ENCODE measurements at regions of chr10 and their contacts with region 1.

Region 1: DNA sequence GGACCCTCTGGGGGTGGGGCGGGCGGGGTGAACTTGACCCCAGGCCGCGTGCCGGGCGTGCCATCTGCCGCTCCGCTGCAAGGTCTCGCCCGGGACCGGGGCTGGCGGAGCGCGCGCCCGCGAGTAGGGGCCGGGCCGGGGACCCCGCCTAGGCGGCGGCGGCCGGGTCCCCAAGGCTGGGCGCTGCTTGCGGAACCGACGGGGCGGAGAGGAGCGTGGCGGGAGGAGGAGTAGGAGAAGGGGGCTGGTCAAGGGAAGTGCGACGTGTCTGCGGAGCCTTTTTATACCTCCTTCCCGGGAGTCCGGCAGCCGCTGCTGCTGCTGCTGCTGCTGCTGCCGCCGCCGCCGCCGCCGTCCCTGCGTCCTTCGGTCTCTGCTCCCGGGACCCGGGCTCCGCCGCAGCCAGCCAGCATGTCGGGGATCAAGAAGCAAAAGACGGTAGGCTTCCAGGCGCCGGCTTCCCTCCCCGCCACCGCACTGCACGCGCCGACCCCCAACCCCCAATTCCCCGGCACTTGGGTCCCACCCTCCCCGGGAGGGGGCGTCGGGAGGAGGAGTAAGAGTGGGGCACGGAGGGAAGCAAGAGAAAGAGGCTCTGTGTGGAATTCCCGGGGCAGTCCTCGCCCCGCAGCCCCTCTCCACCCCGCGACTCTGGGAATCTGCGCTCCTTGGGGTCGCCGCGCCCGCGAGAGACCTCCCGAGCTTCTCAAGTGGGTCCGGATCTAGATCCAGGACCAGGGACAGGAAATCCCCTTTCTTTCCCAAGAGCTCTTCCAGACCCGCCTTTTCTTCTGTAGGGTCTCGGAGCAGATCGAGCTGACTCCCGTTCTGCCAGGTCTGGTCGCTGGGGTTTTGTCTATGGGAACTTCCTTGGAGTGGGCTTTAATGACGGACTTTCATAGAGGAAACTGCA is at the start of gene PAPSS2:
- DNase-seq: peak; percentile 53
- ATAC-seq: peak; percentile 59
- H3K4me3 ChIP-seq: peak within 1 kb of the TSS; percentile 93
- H3K27ac ChIP-seq: no peak within 1 kb of the TSS
- H3K4me1 ChIP-seq: peaks cover 31% of the 10 kb centered on the region
- H3K27me3 ChIP-seq: no peaks in the 10 kb centered on the region
- CTCF ChIP-seq: no peak
- total RNA-seq, gene PAPSS2: 16.4 and 17.3 TPM in 2 replicates

Region 2: DNA sequence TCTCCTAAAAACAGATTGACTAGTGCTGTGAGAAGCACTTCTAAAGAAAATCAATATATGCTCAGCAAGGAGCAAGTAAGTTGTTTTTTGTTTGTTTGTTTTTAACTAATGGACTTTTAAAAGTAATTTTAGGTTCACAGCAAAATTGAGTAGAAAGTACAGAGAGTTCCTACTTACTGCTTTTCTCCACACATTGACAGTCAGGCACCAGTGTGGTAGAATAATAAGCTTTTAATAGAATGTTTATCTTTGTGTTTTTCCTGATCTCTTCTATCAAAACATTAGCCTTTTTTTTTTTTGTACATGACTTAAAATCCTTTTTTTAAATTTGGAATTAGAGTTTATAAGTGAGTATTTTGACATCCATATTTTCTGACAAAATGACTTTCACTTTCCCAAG is 127.1 kb before region 1 on chr10:
- CTCF ChIA-PET with region 1: interaction called, 3 read pairs
- POLR2A ChIA-PET with region 1: no interaction called
- intact Hi-C with region 1: loop called (anchors 1 kb)
- DNase-seq: no peak
- ATAC-seq: no peak
- H3K4me3 ChIP-seq: no peak overlapping the region
- H3K27ac ChIP-seq: no peak overlapping the region
- H3K4me1 ChIP-seq: no peaks in the 10 kb centered on the region; the same call in 1 of the 2 replicates
- H3K27me3 ChIP-seq: no peaks in the 10 kb centered on the region
- CTCF ChIP-seq: no peak

Region 3: GRCh38 chr10:87675396-87676376 is 15.9 kb after region 1 on chr10:
- CTCF ChIA-PET with region 1: no interaction called
- POLR2A ChIA-PET with region 1: interaction called, 10 read pairs
- intact Hi-C with region 1: no loop called
- DNase-seq: peak; percentile 82
- ATAC-seq: peak; percentile 62
- H3K4me3 ChIP-seq: no peak overlapping the region
- H3K27ac ChIP-seq: peak overlapping the region; percentile 43
- H3K4me1 ChIP-seq: peaks cover 18% of the 10 kb centered on the region
- H3K27me3 ChIP-seq: no peaks in the 10 kb centered on the region
- CTCF ChIP-seq: no peak

Region 4: DNA sequence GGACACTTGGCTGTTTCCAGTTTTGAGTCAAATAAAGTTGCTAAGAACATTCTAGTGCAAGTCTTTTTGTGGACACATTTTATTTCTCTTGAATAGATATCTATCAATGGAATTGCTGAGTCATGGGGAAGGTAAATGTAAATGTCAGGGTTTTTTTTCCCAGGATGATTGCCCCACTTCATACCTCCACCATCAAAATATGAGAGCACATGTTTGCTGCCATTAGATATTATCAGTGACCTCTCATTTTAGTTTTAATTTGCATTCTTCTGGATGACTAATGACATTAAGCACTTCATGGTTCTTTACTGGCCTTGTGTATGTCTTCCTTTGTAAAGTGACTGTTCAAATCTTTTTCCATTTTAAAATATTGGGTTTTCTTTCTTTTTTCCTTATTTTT is 45.5 kb after region 1 on chr10:
- CTCF ChIA-PET with region 1: no interaction called
- POLR2A ChIA-PET with region 1: no interaction called
- intact Hi-C with region 1: no loop called
- DNase-seq: peak; percentile 73
- ATAC-seq: peak; percentile 78
- H3K4me3 ChIP-seq: no peak overlapping the region
- H3K27ac ChIP-seq: peak overlapping the region; percentile 60
- H3K4me1 ChIP-seq: peaks cover 25% of the 10 kb centered on the region
- H3K27me3 ChIP-seq: no peaks in the 10 kb centered on the region
- CTCF ChIP-seq: no peak

Region 5: DNA sequence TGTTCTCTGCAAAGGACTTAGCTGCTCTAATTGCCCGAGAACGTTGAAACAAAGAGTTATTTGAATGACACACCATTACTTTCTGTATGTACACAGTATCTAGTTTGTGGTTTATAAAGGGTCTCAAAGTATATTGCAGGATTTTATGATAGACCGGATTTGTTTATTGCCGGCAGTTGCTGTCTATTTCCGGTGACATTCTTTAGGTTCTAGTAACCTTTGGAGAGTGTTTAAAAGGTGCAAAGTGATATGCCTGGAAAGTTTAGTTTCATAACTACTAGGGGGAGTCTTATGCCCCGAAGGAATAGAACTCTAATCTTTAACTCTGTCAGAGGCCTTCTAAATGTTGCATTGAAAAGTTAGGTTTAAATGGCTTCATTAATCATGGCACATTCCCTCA is 63.7 kb after region 1 on chr10:
- CTCF ChIA-PET with region 1: no interaction called
- POLR2A ChIA-PET with region 1: no interaction called
- intact Hi-C with region 1: loop called (anchors 5 kb)
- DNase-seq: peak; percentile 54
- ATAC-seq: peak; percentile 92
- H3K4me3 ChIP-seq: 0 out of 2 replicates have a peak overlapping the region, but pooled peaks have one; percentile 18
- H3K27ac ChIP-seq: peak overlapping the region; percentile 65
- H3K4me1 ChIP-seq: peaks cover 22% of the 10 kb centered on the region
- H3K27me3 ChIP-seq: no peaks in the 10 kb centered on the region
- CTCF ChIP-seq: no peak

Region 6: DNA sequence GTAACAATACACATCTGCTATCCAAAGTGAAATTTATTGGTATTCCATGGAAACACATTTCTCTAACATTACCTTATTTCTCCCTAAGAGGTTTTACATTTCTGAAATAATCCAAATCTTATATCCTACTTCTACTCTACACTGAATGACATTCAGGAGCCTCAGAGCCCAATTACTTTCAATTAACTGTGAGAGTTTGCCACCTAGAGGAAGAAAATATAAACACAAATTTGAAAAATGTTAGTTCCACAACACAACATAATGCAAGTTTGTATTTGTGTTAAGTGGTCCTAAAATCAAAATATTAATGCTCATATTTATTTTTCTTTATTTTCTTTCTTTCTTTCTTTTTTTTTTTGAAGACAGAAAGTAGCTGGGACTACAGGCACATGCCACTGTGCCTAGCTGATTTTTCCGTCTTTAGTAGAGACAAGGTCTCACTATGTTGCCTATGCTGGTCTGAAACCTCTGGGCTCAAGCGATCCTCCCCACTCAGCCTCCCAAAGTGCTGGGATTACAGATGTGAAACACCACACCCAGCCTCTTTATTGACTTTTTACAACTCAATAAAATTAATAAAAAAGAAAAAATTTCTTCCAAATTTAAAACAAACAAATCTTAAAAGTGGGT is 112.2 kb after region 1 on chr10:
- CTCF ChIA-PET with region 1: no interaction called
- POLR2A ChIA-PET with region 1: no interaction called
- intact Hi-C with region 1: loop called (anchors 1 kb)
- DNase-seq: peak; percentile 59
- ATAC-seq: peak; percentile 41
- H3K4me3 ChIP-seq: no peak overlapping the region
- H3K27ac ChIP-seq: no peak overlapping the region
- H3K4me1 ChIP-seq: peaks cover 33% of the 10 kb centered on the region
- H3K27me3 ChIP-seq: no peaks in the 10 kb centered on the region
- CTCF ChIP-seq: peak; percentile 66

Measured in PC-3 (cell line).